ENCODE measurements at regions of chr3 and their contacts with region 1.

Region 1: DNA sequence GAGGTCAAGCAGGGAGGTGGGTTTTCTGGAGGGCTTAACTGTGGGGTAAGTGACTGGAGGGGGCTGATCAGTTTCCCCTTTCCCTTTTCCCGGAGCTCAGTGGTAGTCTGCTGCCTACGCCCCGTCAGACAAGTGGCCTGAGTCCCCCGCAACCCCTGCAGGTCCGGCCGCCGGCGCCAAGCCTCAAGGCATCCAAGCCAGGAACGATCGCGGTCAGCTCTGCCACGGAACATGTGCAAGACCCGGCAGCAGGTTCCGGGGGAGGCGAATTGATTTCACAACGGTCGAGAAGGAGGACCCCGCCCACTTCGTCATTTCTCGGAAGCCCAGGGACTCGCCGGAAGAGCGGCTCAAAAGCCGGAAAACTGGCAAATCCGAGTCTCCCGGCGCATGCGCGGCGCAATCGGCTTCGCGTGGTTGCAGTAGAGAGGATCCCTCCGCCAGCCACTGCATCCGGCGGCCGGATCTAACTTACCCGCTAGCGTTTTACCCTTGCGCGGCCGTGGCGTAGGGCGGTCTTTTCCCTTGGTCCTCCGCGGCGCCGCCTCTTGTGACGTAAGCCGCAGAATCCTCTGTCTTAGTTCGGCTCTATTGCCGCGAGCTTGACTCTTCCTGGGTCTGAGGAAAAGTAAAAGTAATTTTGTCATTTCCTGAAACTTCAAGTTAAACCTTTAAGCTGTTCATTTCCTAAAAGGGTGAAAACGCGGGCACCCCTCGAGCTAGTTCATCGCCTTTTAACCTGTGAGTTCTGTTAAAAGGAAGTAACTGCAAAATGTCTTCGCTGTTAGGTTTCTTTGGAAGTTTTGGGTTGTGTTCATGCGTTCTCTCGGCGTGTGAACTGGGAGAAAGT is 14.9 kb upstream of the CCNL1 start:
- DNase-seq: peak; percentile 99
- H3K4me3 ChIP-seq: peak overlapping the region; percentile 50
- H3K27ac ChIP-seq: peak overlapping the region; percentile 93
- H3K4me1 ChIP-seq: no peaks in the 10 kb centered on the region
- H3K27me3 ChIP-seq: no peaks in the 10 kb centered on the region
- CTCF ChIP-seq: no peak

Region 2: GRCh38 chr3:157159762-157160657 is 14.9 kb before region 1 on chr3 and contains the start of gene CCNL1:
- intact Hi-C with region 1: loop called (anchors 1 kb)
- DNase-seq: peak; percentile 96
- H3K4me3 ChIP-seq: peak within 1 kb of the TSS; percentile 88
- H3K27ac ChIP-seq: peak within 1 kb of the TSS; percentile 100
- H3K4me1 ChIP-seq: peaks cover 23% of the 10 kb centered on the region
- H3K27me3 ChIP-seq: no peaks in the 10 kb centered on the region
- CTCF ChIP-seq: no peak
- total RNA-seq, gene CCNL1: 76.4 to 103 TPM

Region 3: GRCh38 chr3:157300094-157300493 is 125.2 kb after region 1 on chr3:
- intact Hi-C with region 1: no loop called
- DNase-seq: no peak
- H3K4me3 ChIP-seq: no peak overlapping the region
- H3K27ac ChIP-seq: no peak overlapping the region
- H3K4me1 ChIP-seq: no peaks in the 10 kb centered on the region
- H3K27me3 ChIP-seq: no peaks in the 10 kb centered on the region
- CTCF ChIP-seq: no peak